Activated CD8-positive, alpha-beta T cell treated with anti-CD3 and anti-CD28 coated beads, Interleukin-2, amount 10 ng/mL, durations not matched to agents 7 days and 5 days (primary cell): ENCODE measurements at regions of chr4 and their contacts with region 1.

Region 1: DNA sequence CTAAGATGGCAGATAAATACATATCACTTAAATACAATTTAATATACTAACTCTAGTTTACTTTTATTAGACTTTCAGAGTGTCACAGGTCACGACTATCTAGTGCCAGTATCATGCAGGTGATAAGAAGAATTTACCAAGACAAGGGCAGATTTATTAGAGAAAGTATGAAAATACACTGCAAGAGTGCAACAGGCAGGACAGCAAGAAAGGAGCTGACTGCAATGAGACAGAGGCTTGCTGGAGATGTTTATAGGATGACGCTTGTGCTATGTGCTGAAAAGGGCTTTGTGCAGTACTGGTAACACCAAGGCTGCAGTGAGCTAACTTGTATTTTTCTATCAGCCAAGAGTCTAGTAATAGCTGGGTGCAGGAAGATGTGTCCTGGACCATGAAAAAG is 96.7 kb upstream of the QRFPR start:
- DNase-seq: no peak
- ATAC-seq: no peak
- H3K4me3 Mint-ChIP-seq: no peak overlapping the region
- H3K27ac Mint-ChIP-seq: no peak overlapping the region
- H3K4me1 Mint-ChIP-seq: peaks cover 4% of the 10 kb centered on the region
- H3K27me3 Mint-ChIP-seq: peaks cover 9% of the 10 kb centered on the region

Region 2: GRCh38 chr4:121462660-121463261 is 14.7 kb before region 1 on chr4:
- CTCF ChIA-PET with region 1: interaction called, 18 read pairs
- POLR2A ChIA-PET with region 1: no interaction called
- DNase-seq: peak; percentile 71
- ATAC-seq: peak; percentile 91
- H3K4me3 Mint-ChIP-seq: no peak overlapping the region
- H3K27ac Mint-ChIP-seq: no peak overlapping the region
- H3K4me1 Mint-ChIP-seq: no peaks in the 10 kb centered on the region
- H3K27me3 Mint-ChIP-seq: peaks cover 14% of the 10 kb centered on the region